Psoas muscle (tissue), 8 donors: ENCODE measurements at regions of chr16 and their contacts with region 1.

Region 1: GRCh38 chr16:82626791-82627261 is at the start of gene CDH13:
- DNase-seq: peak; percentile 27 to 67
- ATAC-seq: peak; percentile 12 to 55 (median 40)
- H3K4me3 ChIP-seq: peak within 1 kb of the TSS; percentile 92
- H3K27ac ChIP-seq: peak within 1 kb of the TSS; percentile 99
- H3K4me1 ChIP-seq: peaks cover 44% of the 10 kb centered on the region
- H3K27me3 ChIP-seq: no peaks in the 10 kb centered on the region
- CTCF ChIP-seq: no peak
- total RNA-seq, gene CDH13: 22.8 to 30.7 (median 29.5) TPM

Region 2: GRCh38 chr16:82585675-82586074 is 41.2 kb before region 1 on chr16:
- intact Hi-C with region 1: no loop called
- DNase-seq: no peak
- ATAC-seq: peak in 1 of 4 donors; percentile 27
- H3K4me3 ChIP-seq: no peak overlapping the region
- H3K27ac ChIP-seq: peak overlapping the region; percentile 85
- H3K4me1 ChIP-seq: peaks cover 20% of the 10 kb centered on the region
- H3K27me3 ChIP-seq: no peaks in the 10 kb centered on the region
- CTCF ChIP-seq: no peak

Region 3: DNA sequence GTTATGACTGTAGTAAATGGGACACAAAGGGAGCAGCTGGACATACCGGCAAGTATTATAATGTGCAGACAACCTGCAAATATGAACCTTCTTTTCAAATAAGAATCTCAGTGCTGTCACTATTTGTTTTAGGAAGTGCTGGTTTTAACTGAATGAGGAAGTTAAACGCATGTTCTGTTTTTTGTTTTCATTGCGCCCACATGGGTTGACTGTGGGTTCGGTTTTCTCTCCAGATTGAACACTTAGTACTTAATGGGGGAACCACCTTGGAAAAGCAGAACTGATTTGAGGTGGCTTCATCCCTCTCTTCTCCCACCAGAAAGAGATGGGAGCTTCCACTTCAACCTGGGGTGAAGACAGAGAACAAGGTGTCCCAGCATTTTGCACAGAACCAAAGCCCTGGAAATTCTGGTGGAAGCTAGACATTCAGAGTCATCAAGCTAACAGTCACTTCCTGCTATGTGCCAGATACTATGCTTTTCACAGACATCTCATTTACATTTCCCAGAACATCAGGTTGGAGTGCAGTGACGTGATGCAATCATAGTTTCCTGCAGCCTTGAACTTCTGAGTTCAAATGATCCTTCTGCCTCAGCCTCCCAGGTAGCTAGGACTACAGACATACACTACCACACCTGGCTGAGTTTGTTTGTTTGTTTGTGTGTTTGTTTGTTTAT is 149.8 kb after region 1 on chr16:
- intact Hi-C with region 1: loop called in 1 of 2 experiments (anchors 5 kb)
- DNase-seq: no peak
- ATAC-seq: no peak
- H3K4me3 ChIP-seq: no peak overlapping the region
- H3K27ac ChIP-seq: no peak overlapping the region
- H3K4me1 ChIP-seq: peaks cover 31% of the 10 kb centered on the region
- H3K27me3 ChIP-seq: no peaks in the 10 kb centered on the region
- CTCF ChIP-seq: no peak

Region 4: GRCh38 chr16:82888591-82889001 is 261.8 kb after region 1 on chr16:
- intact Hi-C with region 1: loop called in 1 of 2 experiments (anchors 10 kb)
- DNase-seq: no peak
- ATAC-seq: peak in 3 of 4 donors; percentile 27 to 68 (median 63)
- H3K4me3 ChIP-seq: peak overlapping the region; percentile 20
- H3K27ac ChIP-seq: no peak overlapping the region
- H3K4me1 ChIP-seq: peaks cover 34% of the 10 kb centered on the region
- H3K27me3 ChIP-seq: no peaks in the 10 kb centered on the region
- CTCF ChIP-seq: no peak

Region 5: DNA sequence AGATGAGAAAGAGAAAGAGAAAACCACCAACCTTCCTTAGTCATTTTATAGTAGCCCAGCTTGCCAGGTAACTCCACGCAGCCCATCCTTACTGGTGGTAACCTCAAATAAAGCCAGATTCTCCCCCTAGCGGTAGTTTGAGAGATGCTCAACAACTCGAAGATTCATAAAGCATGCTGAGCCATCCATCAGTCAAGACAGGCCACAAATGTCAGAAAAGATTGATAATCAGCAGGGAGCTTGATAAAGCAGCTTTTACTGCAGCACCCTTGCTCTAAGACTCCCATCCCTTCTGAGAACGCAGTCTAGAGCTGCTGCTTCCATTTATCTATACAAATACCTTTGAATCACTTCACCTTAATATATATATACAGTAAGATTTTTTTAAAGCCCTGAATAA is 729.4 kb after region 1 on chr16:
- intact Hi-C with region 1: loop called in 1 of 2 experiments (anchors 10 kb)
- DNase-seq: no peak
- ATAC-seq: peak; percentile 56 to 85 (median 71)
- H3K4me3 ChIP-seq: no peak overlapping the region
- H3K27ac ChIP-seq: no peak overlapping the region
- H3K4me1 ChIP-seq: peaks cover 14% of the 10 kb centered on the region
- H3K27me3 ChIP-seq: no peaks in the 10 kb centered on the region
- CTCF ChIP-seq: peak; percentile 59

Region 6: DNA sequence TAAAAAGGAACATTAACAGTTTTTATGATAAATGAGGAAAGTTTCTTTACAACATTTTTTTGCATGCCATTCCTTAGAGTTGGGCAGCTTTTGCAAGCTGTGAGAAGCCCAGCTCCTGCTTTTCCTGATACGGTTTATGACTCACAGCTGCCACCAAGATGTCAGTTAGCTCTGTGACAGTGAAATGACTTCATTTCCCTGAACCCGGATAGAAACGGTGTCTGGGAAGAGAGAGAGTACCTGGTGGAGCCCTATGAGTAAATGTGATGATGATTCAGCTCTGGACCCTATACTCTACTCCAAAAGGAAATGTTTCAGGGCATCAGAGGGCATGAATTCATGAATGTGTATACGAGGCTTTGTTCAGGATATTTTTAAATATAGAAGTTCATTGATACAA is 814.7 kb after region 1 on chr16:
- intact Hi-C with region 1: loop called in 1 of 2 experiments (anchors 10 kb)
- DNase-seq: no peak
- ATAC-seq: peak in 1 of 4 donors; percentile 41
- H3K4me3 ChIP-seq: no peak overlapping the region
- H3K27ac ChIP-seq: no peak overlapping the region
- H3K4me1 ChIP-seq: peaks cover 4% of the 10 kb centered on the region
- H3K27me3 ChIP-seq: no peaks in the 10 kb centered on the region
- CTCF ChIP-seq: no peak